ENCODE measurements at regions of chr10 and their contacts with region 1.

Region 1: DNA sequence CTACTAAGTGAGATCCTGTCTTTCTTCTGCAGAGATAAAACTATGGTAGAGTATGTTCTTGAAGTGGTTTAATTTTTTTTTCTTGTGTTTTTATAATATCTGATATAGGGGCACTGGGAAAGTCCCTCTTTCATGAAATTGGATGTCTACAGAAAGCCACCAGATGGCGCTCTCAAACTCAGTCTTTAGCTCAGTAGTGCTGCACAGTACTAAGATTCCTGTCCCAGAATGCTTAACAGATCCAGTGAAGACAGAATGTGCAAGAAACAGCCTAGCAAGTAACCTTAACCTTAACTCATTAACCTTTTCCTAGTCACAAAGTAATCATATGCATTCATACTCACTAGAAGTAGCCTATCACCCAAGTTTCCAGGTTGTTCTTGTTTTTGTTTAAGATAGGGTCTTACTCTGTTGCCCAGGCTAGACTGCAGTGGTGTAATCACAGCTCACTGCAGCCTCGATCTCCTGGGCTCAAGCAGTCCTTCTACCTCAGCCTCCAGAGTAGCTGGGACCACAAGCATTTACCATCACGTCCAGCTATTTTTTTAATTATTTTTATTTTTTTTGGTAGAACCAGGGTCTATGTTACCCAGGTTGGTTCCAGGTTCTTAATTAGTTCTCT is 56.7 kb downstream of the IDE start:
- DNase-seq: peak; percentile 34
- H3K4me3 Mint-ChIP-seq: no peak overlapping the region
- H3K27ac Mint-ChIP-seq: no peak overlapping the region
- H3K4me1 Mint-ChIP-seq: peaks cover 6% of the 10 kb centered on the region
- H3K27me3 Mint-ChIP-seq: no peaks in the 10 kb centered on the region

Region 2: DNA sequence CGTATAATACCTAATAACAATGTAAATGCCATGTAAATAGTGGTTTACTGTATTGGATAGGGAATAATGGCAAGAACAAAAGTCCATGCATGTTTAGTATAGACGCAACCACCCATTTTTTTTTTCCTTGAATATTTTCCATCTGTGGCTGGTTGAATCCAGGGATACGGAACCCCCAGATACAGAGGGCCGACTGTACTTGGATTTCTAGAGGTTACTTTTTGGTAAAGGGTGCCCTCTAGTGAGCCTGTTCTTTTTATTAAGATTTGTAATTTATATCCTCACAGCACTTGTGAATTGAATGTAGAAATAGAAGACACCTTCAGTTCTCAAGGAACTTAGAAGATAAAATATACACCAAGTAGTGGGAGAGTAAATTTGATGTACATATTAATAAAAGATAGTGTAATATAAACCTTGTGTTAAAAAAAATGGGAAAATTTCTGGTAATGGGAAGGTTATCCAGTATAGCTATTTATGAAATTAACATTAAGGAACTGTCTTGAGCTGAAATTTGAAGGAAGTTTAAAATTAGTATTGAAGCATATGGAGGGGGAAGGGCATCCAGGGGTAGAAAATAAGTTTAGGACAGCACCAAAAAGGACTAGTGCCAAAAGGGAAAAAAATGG is 363.2 kb after region 1 on chr10:
- intact Hi-C with region 1: loop called (anchors 10 kb)
- DNase-seq: no peak
- H3K4me3 Mint-ChIP-seq: no peak overlapping the region
- H3K27ac Mint-ChIP-seq: no peak overlapping the region
- H3K4me1 Mint-ChIP-seq: peaks cover 8% of the 10 kb centered on the region
- H3K27me3 Mint-ChIP-seq: peaks cover 1% of the 10 kb centered on the region

Measured in activated T-helper 2 cell treated with anti-CD3 and anti-CD28 coated beads, Interferon-gamma antibody, Interleukin-2, Interleukin-4, amounts not matched to agents 10 μg/mL and 5 μg/mL and 100 μg/mL, durations not matched to agents 14 hours and 24 hours and 36 hours (primary cell).